Activated CD8-positive, alpha-beta T cell treated with anti-CD3 and anti-CD28 coated beads, Interleukin-2, amount 10 ng/mL, durations not matched to agents 7 days and 5 days (primary cell): ENCODE measurements at regions of chr11 and their contacts with region 1.

Region 1: DNA sequence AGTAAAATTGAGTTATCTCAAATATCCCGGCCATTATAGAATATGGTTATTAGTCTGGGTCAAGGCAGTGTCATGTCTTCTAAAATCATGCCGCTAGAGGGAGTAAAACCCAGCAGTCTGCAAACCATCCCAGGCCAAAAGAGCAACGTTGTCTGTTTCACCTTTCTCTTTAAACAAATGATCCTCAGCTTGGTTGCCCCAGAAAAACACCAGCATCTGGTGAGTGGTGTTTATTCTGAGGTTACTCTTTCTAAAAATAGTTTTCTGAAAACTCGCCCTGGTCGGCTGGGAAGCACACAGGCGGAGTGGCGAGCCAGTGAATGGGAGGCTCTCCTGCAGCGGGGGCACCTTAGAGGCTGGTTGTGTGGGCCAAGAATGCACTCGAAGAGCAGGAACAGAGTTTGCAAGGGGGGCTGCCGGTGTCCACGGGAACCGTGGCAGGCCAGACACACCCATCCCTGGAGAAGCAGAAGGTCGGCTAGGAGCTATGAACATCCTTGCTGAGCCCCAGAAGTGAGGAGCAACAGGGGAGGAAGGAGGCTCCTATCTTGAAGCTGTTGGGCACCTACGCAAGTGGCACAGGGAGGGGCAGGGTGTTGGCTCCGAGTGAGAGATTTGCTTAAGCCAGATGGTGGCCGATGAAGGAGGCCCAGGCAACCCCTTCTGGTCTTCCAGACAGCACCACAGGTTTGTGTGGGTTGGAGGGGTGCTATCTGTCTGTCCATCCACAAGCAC is 297.1 kb downstream of the ETS1 start:
- DNase-seq: peak; percentile 87
- ATAC-seq: peak; percentile 76
- H3K4me3 Mint-ChIP-seq: peak overlapping the region; percentile 96
- H3K27ac Mint-ChIP-seq: peak overlapping the region; percentile 84
- H3K4me1 Mint-ChIP-seq: peaks cover 90% of the 10 kb centered on the region
- H3K27me3 Mint-ChIP-seq: no peaks in the 10 kb centered on the region

Region 2: GRCh38 chr11:128323381-128323780 is 33.1 kb after region 1 on chr11:
- CTCF ChIA-PET with region 1: interaction called, 84 read pairs
- POLR2A ChIA-PET with region 1: interaction called, 38 read pairs
- DNase-seq: peak; percentile 73
- ATAC-seq: peak; percentile 25
- H3K4me3 Mint-ChIP-seq: peak overlapping the region; percentile 73
- H3K27ac Mint-ChIP-seq: peak overlapping the region; percentile 95
- H3K4me1 Mint-ChIP-seq: peaks cover 92% of the 10 kb centered on the region
- H3K27me3 Mint-ChIP-seq: no peaks in the 10 kb centered on the region

Region 3: GRCh38 chr11:128458321-128458720 is 168.0 kb after region 1 on chr11:
- CTCF ChIA-PET with region 1: interaction called, 38 read pairs
- POLR2A ChIA-PET with region 1: interaction called, 5 read pairs
- DNase-seq: no peak
- ATAC-seq: no peak
- H3K4me3 Mint-ChIP-seq: no peak overlapping the region
- H3K27ac Mint-ChIP-seq: peak overlapping the region; percentile 2
- H3K4me1 Mint-ChIP-seq: peaks cover 60% of the 10 kb centered on the region
- H3K27me3 Mint-ChIP-seq: no peaks in the 10 kb centered on the region

Region 4: GRCh38 chr11:128482512-128483191 is 192.4 kb after region 1 on chr11:
- CTCF ChIA-PET with region 1: interaction called, 42 read pairs
- POLR2A ChIA-PET with region 1: interaction called, 15 read pairs
- DNase-seq: peak; percentile 65
- ATAC-seq: peak; percentile 70
- H3K4me3 Mint-ChIP-seq: peak overlapping the region; percentile 63
- H3K27ac Mint-ChIP-seq: peak overlapping the region; percentile 88
- H3K4me1 Mint-ChIP-seq: peaks cover 94% of the 10 kb centered on the region
- H3K27me3 Mint-ChIP-seq: no peaks in the 10 kb centered on the region

Region 5: DNA sequence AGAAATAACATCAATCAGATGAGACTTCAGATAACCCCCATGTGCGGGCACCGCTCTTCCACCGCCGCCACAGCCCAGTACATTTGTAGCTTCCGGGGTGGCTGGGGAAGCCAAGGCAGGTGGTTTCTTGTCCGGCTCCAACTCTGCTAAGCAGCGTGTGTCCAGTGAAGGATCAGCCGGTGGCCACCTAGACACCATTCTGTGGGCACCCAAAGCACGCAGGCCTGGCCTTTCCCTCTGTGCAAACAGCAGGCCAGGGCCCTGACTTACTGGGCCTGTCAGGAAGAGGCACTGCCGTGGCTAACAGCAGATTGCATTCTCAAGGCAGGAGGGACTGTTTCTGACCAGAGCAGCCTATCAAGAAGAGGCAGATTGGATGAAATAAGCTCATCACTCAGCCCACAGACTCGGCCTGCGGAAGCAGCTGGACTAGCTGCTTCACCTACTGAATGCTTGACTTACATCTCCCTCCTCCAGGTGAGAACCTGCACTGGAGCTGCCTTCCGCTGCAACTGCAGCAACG is 222.3 kb after region 1 on chr11:
- CTCF ChIA-PET with region 1: interaction called, 61 read pairs
- POLR2A ChIA-PET with region 1: interaction called, 184 read pairs
- DNase-seq: peak; percentile 68
- ATAC-seq: peak; percentile 45
- H3K4me3 Mint-ChIP-seq: peak overlapping the region; percentile 96
- H3K27ac Mint-ChIP-seq: peak overlapping the region; percentile 82
- H3K4me1 Mint-ChIP-seq: peaks cover 84% of the 10 kb centered on the region
- H3K27me3 Mint-ChIP-seq: no peaks in the 10 kb centered on the region

Region 6: GRCh38 chr11:128831174-128832120 is 541.2 kb after region 1 on chr11:
- CTCF ChIA-PET with region 1: interaction called, 28 read pairs
- POLR2A ChIA-PET with region 1: interaction called, 3 read pairs
- DNase-seq: peak; percentile 91
- ATAC-seq: peak; percentile 85
- H3K4me3 Mint-ChIP-seq: peak overlapping the region; percentile 58
- H3K27ac Mint-ChIP-seq: peak overlapping the region; percentile 66
- H3K4me1 Mint-ChIP-seq: peaks cover 30% of the 10 kb centered on the region
- H3K27me3 Mint-ChIP-seq: peaks cover 2% of the 10 kb centered on the region